B cell (primary cell): ENCODE measurements at regions of chr17 and their contacts with region 1.

Region 1: DNA sequence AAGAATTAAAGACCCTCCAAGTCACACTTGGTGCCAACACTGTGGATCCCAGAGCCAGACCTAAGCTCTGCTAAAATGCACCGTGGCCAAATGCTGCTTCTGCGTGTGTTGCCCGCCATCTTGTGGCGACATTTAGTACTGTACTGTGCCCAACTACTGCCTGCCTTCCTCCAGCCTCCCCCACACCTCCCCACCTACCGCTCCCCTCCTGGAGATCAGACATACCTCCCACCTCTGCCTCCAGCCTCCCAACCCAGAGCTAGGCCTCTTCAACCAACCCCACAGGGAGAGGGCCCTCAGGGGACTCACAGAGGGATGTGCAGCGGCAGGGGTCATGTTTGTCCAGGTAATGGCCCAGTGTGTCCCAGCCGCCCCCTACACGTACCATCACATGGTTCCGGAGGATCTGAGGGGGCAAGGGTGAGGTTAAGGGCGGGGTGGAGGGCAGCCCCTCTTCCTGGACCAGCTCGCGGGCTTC is 5.5 kb downstream of the GAS2L2 start:
- DNase-seq: peak; percentile 84
- ATAC-seq: peak; percentile 92
- H3K4me3 ChIP-seq: no peak overlapping the region
- H3K4me3 Mint-ChIP-seq: no peak overlapping the region
- H3K27ac ChIP-seq: no peak overlapping the region
- H3K27ac Mint-ChIP-seq: no peak overlapping the region
- H3K4me1 ChIP-seq: peaks cover 3 to 10% of the 10 kb centered on the region in 2 donors
- H3K4me1 Mint-ChIP-seq: peaks cover 6% of the 10 kb centered on the region
- H3K27me3 ChIP-seq: peaks cover 0 to 51% (median 23%) of the 10 kb centered on the region in 4 experiments
- H3K27me3 Mint-ChIP-seq: peaks cover 51% of the 10 kb centered on the region
- CTCF ChIP-seq: peak; percentile 88

Region 2: DNA sequence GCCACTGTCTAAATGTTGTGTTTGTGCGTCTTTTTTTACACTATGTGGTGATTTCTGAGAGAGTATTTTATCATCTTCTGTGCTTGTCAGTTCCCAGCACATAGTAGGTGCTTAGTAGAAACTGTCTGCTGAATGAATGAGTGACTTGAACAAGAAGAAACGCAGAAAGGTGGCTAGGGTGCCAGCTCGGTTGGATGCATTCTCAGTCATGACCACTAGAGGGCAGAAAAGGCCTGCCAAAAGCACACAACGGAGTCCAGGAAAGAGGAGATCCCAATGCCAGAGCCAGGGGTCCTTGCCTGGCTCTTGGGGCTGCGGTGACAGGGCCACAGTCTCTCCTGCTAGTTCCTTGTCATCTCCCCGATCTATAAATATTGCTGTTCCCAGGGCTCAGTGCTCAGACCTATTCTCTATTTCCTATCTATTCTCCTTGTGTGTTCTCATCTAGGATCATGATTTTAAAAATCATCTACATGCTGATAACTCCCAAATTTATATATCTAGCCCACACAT is 1327.3 kb before region 1 on chr17:
- CTCF ChIA-PET with region 1: interaction called, 7 read pairs
- POLR2A ChIA-PET with region 1: no interaction called
- intact Hi-C with region 1: loop called (anchors 5 kb)
- DNase-seq: peak; percentile 75
- ATAC-seq: peak; percentile 58
- H3K4me3 ChIP-seq: no peak overlapping the region
- H3K4me3 Mint-ChIP-seq: no peak overlapping the region
- H3K27ac ChIP-seq: no peak overlapping the region
- H3K27ac Mint-ChIP-seq: no peak overlapping the region
- H3K4me1 ChIP-seq: peaks cover 6 to 11% of the 10 kb centered on the region in 2 donors
- H3K4me1 Mint-ChIP-seq: no peaks in the 10 kb centered on the region
- H3K27me3 ChIP-seq: peaks cover 0 to 16% (median 5%) of the 10 kb centered on the region in 4 experiments
- H3K27me3 Mint-ChIP-seq: peaks cover 44% of the 10 kb centered on the region
- CTCF ChIP-seq: peak; percentile 99

Region 3: GRCh38 chr17:35170968-35171771 is 576.4 kb before region 1 on chr17:
- CTCF ChIA-PET with region 1: interaction called, 16 read pairs
- POLR2A ChIA-PET with region 1: no interaction called
- intact Hi-C with region 1: no loop called
- DNase-seq: peak; percentile 28
- ATAC-seq: peak; percentile 31
- H3K4me3 ChIP-seq: no peak overlapping the region
- H3K4me3 Mint-ChIP-seq: no peak overlapping the region
- H3K27ac ChIP-seq: no peak overlapping the region
- H3K27ac Mint-ChIP-seq: no peak overlapping the region
- H3K4me1 ChIP-seq: no peaks in the 10 kb centered on the region
- H3K4me1 Mint-ChIP-seq: no peaks in the 10 kb centered on the region
- H3K27me3 ChIP-seq: peaks cover 0 to 9% (median 0%) of the 10 kb centered on the region in 4 experiments
- H3K27me3 Mint-ChIP-seq: peaks cover 28% of the 10 kb centered on the region
- CTCF ChIP-seq: peak; percentile 63

Region 4: GRCh38 chr17:35555695-35556094 is 191.9 kb before region 1 on chr17:
- CTCF ChIA-PET with region 1: interaction called, 14 read pairs
- POLR2A ChIA-PET with region 1: no interaction called
- intact Hi-C with region 1: loop called (anchors 2 kb)
- DNase-seq: no peak
- ATAC-seq: no peak
- H3K4me3 ChIP-seq: no peak overlapping the region
- H3K4me3 Mint-ChIP-seq: no peak overlapping the region
- H3K27ac ChIP-seq: no peak overlapping the region
- H3K27ac Mint-ChIP-seq: no peak overlapping the region
- H3K4me1 ChIP-seq: no peaks in the 10 kb centered on the region
- H3K4me1 Mint-ChIP-seq: no peaks in the 10 kb centered on the region
- H3K27me3 ChIP-seq: peaks cover 0 to 14% (median 0%) of the 10 kb centered on the region in 4 experiments
- H3K27me3 Mint-ChIP-seq: peaks cover 39% of the 10 kb centered on the region
- CTCF ChIP-seq: no peak

Region 5: GRCh38 chr17:35612924-35613521 is 134.6 kb before region 1 on chr17:
- CTCF ChIA-PET with region 1: interaction called, 65 read pairs
- POLR2A ChIA-PET with region 1: no interaction called
- intact Hi-C with region 1: no loop called
- DNase-seq: peak; percentile 46
- ATAC-seq: no peak
- H3K4me3 ChIP-seq: no peak overlapping the region
- H3K4me3 Mint-ChIP-seq: no peak overlapping the region
- H3K27ac ChIP-seq: no peak overlapping the region
- H3K27ac Mint-ChIP-seq: no peak overlapping the region
- H3K4me1 ChIP-seq: no peaks in the 10 kb centered on the region
- H3K4me1 Mint-ChIP-seq: peaks cover 4% of the 10 kb centered on the region
- H3K27me3 ChIP-seq: no peaks in the 10 kb centered on the region
- H3K27me3 Mint-ChIP-seq: no peaks in the 10 kb centered on the region
- CTCF ChIP-seq: peak; percentile 67

Region 6: DNA sequence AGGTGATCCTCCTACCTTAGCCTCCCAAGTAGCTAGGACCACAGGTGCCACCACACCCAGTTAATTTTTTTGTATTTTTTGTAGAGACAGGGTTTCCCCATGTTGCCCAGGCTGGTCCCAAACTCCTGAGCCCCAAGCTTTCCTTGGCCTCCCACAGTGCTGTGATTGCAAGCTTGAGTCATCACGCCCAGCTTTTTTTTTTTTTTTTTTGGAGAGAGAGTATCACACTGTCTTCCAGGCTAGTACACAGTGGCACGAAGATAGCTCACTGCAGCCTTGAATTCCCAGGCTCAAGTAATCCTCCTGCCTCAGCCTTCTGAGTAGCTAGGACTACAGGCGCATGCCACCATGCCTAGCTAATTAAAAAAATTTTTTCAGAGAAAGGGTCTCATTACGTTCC is 93.9 kb after region 1 on chr17:
- CTCF ChIA-PET with region 1: no interaction called
- POLR2A ChIA-PET with region 1: no interaction called
- intact Hi-C with region 1: no loop called
- DNase-seq: no peak
- ATAC-seq: no peak
- H3K4me3 ChIP-seq: no peak overlapping the region
- H3K4me3 Mint-ChIP-seq: no peak overlapping the region
- H3K27ac ChIP-seq: no peak overlapping the region
- H3K27ac Mint-ChIP-seq: no peak overlapping the region
- H3K4me1 ChIP-seq: no peaks in the 10 kb centered on the region
- H3K4me1 Mint-ChIP-seq: no peaks in the 10 kb centered on the region
- H3K27me3 ChIP-seq: no peaks in the 10 kb centered on the region
- H3K27me3 Mint-ChIP-seq: no peaks in the 10 kb centered on the region
- CTCF ChIP-seq: no peak